ENCODE measurements at regions of chr12 and their contacts with region 1.

Region 1: GRCh38 chr12:110698171-110698902 is 9.4 kb upstream of the HVCN1 start:
- DNase-seq: peak; percentile 61 to 90
- ATAC-seq: peak; percentile 93 to 100 (median 99)
- H3K4me3 ChIP-seq: no peak overlapping the region
- H3K4me3 Mint-ChIP-seq: no peak overlapping the region
- H3K27ac ChIP-seq: no peak overlapping the region
- H3K27ac Mint-ChIP-seq: peak overlapping the region; percentile 34 to 65
- H3K4me1 ChIP-seq: peaks cover 28% of the 10 kb centered on the region
- H3K4me1 Mint-ChIP-seq: peaks cover 6 to 16% of the 10 kb centered on the region in 2 donors
- H3K27me3 ChIP-seq: no peaks in the 10 kb centered on the region
- H3K27me3 Mint-ChIP-seq: no peaks in the 10 kb centered on the region
- CTCF ChIP-seq: peak; percentile 86

Region 2: DNA sequence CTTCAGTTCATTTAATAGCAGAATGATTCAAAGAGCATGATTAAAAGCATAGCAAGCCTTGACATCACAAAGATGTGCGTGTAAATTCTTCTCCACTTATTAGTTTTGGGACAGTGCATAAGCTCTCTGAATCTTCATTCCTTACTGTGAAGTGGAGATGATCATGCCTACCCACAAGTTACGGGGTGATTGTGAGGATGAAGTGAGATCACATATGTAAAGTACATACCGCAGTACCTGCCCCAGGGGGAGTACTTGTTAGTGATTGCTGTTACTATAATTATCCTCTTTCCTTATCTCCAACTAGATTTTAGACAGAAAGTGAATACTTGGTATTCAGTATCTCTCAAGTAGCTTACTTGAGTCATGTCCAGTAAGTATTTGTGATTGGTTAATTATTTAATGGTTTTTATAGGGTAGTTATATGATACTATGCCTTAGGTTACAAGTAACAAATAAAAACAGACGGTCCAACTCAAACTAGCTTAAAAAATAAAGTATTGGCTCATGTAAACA is 190.2 kb before region 1 on chr12:
- intact Hi-C with region 1: loop called (anchors 1 kb)
- DNase-seq: no peak
- ATAC-seq: no peak
- H3K4me3 ChIP-seq: no peak overlapping the region
- H3K4me3 Mint-ChIP-seq: no peak overlapping the region
- H3K27ac ChIP-seq: no peak overlapping the region
- H3K27ac Mint-ChIP-seq: no peak overlapping the region
- H3K4me1 ChIP-seq: no peaks in the 10 kb centered on the region
- H3K4me1 Mint-ChIP-seq: no peaks in the 10 kb centered on the region
- H3K27me3 ChIP-seq: no peaks in the 10 kb centered on the region
- H3K27me3 Mint-ChIP-seq: no peaks in the 10 kb centered on the region
- CTCF ChIP-seq: no peak

Region 3: DNA sequence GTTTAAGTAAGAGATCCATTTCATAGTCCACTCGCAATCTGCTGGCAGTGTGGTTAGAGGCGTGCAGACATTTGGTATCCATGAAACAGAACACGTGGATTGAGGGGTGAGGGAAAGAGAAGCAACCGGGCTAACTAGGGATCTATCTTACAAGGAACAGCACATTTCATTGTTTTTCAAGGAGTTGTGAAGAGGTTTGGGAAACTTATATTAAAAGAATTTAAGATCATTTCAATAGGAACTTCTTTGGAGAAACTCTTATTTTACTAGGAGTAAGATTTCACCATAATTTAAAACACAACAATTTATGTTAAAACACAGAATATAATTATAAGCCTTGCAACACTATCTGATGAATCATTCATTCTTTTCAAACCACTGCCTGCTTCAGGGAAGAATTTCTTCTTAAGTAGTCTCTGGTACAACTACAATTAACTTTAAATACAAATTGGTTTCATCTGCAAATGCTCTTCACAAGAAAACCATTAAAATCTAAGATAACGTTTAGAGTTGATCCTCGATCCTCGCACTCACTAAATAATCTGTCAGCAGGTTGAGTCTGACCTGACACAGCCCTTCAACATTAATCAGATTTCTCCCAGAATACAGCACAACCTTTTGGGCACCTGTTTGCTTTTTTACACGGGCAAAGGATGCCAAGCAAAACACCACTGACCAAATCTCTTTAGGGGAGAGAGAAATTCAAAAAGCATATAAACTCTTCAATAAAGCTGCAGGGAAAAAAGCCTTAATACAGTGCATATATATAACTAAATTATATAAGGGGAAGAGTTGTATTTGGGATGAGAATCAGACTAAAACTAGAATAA is 142.5 kb before region 1 on chr12:
- intact Hi-C with region 1: loop called (anchors 1 kb)
- DNase-seq: no peak
- ATAC-seq: no peak
- H3K4me3 ChIP-seq: no peak overlapping the region
- H3K4me3 Mint-ChIP-seq: no peak overlapping the region
- H3K27ac ChIP-seq: no peak overlapping the region
- H3K27ac Mint-ChIP-seq: peak overlapping the region; percentile 52 to 82
- H3K4me1 ChIP-seq: peaks cover 8% of the 10 kb centered on the region
- H3K4me1 Mint-ChIP-seq: peaks cover 46 to 62% of the 10 kb centered on the region in 2 donors
- H3K27me3 ChIP-seq: no peaks in the 10 kb centered on the region
- H3K27me3 Mint-ChIP-seq: no peaks in the 10 kb centered on the region
- CTCF ChIP-seq: no peak

Region 4: GRCh38 chr12:110600254-110600653 is 98.1 kb before region 1 on chr12:
- intact Hi-C with region 1: loop called (anchors 5 kb)
- DNase-seq: peak in 1 of 2 donors; percentile 74
- ATAC-seq: peak in 2 of 3 donors; percentile 44 to 45
- H3K4me3 ChIP-seq: no peak overlapping the region
- H3K4me3 Mint-ChIP-seq: no peak overlapping the region
- H3K27ac ChIP-seq: no peak overlapping the region
- H3K27ac Mint-ChIP-seq: peak overlapping the region in 1 of 2 donors; percentile 51
- H3K4me1 ChIP-seq: peaks cover 11% of the 10 kb centered on the region
- H3K4me1 Mint-ChIP-seq: peaks cover 5 to 6% of the 10 kb centered on the region in 2 donors
- H3K27me3 ChIP-seq: no peaks in the 10 kb centered on the region
- H3K27me3 Mint-ChIP-seq: no peaks in the 10 kb centered on the region
- CTCF ChIP-seq: peak; percentile 55

Measured in natural killer cell (primary cell).